ENCODE measurements at regions of chr18 and their contacts with region 1.

Region 1: GRCh38 chr18:71798986-71799673 is 745.0 kb downstream of the CBLN2 start:
- DNase-seq: no peak
- ATAC-seq: no peak
- H3K4me3 ChIP-seq: no peak overlapping the region
- H3K4me3 Mint-ChIP-seq: no peak overlapping the region
- H3K27ac ChIP-seq: no peak overlapping the region
- H3K27ac Mint-ChIP-seq: no peak overlapping the region
- H3K4me1 ChIP-seq: no peaks in the 10 kb centered on the region
- H3K4me1 Mint-ChIP-seq: no peaks in the 10 kb centered on the region
- H3K27me3 ChIP-seq: no peaks in the 10 kb centered on the region
- H3K27me3 Mint-ChIP-seq: no peaks in the 10 kb centered on the region
- CTCF ChIP-seq: no peak

Region 2: GRCh38 chr18:72187956-72188355 is 388.8 kb after region 1 on chr18:
- CTCF ChIA-PET with region 1: no interaction called
- POLR2A ChIA-PET with region 1: no interaction called
- intact Hi-C with region 1: loop called in 1 of 2 experiments (anchors 5 kb)
- DNase-seq: no peak
- ATAC-seq: no peak
- H3K4me3 ChIP-seq: no peak overlapping the region
- H3K4me3 Mint-ChIP-seq: no peak overlapping the region
- H3K27ac ChIP-seq: no peak overlapping the region
- H3K27ac Mint-ChIP-seq: no peak overlapping the region
- H3K4me1 ChIP-seq: no peaks in the 10 kb centered on the region
- H3K4me1 Mint-ChIP-seq: no peaks in the 10 kb centered on the region
- H3K27me3 ChIP-seq: no peaks in the 10 kb centered on the region
- H3K27me3 Mint-ChIP-seq: no peaks in the 10 kb centered on the region
- CTCF ChIP-seq: no peak